ENCODE measurements at regions of chr19 and their contacts with region 1.

Region 1: DNA sequence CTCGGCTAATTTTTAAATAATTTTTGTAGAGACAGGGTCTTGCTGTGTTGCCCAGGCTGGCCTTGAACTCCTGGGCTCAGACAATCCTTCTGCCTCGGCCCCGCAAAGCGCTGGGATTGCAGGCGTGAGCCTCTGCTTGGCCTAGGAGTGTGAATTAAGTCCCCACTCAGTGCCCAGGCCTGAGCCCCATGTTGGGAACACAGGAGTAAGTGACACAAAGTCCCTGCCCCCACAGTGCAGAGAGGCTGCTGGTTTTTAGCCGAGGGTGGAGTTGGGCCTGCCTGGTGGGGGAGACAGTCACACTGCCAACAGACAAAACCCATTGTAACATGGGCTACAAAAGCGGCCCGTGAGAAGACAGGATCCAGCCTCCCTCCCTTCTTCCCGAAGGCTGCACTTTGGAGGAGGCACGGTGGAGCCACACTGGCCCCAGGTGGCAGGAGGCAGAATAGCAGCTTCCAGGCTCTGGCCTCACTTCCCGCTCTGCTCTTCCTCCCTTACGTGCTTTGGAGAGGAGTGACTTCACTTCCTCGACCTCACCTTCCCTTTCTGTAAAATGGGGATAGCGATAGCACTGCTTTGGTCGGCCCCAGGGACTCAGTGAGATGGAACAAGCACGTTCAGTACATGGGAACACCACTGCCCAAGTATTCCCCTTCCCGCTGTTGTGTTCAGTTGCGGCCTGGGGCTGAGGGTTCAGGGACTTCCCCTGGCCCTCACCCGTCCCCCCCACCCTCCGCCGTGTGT is 15.2 kb upstream of the EHD2 start:
- DNase-seq: peak; percentile 74
- H3K4me3 Mint-ChIP-seq: no peak overlapping the region
- H3K27ac Mint-ChIP-seq: no peak overlapping the region
- H3K4me1 Mint-ChIP-seq: peaks cover 2% of the 10 kb centered on the region
- H3K27me3 Mint-ChIP-seq: no peaks in the 10 kb centered on the region

Region 2: GRCh38 chr19:47284324-47284899 is 413.6 kb before region 1 on chr19:
- CTCF ChIA-PET with region 1: no interaction called
- intact Hi-C with region 1: loop called (anchors 5 kb)
- DNase-seq: peak; percentile 58
- H3K4me3 Mint-ChIP-seq: no peak overlapping the region
- H3K27ac Mint-ChIP-seq: no peak overlapping the region
- H3K4me1 Mint-ChIP-seq: peaks cover 6% of the 10 kb centered on the region
- H3K27me3 Mint-ChIP-seq: no peaks in the 10 kb centered on the region

Region 3: GRCh38 chr19:47436712-47437401 is 261.2 kb before region 1 on chr19:
- CTCF ChIA-PET with region 1: interaction called, 64 read pairs
- intact Hi-C with region 1: loop called (anchors 1 kb)
- DNase-seq: peak; percentile 92
- H3K4me3 Mint-ChIP-seq: no peak overlapping the region
- H3K27ac Mint-ChIP-seq: no peak overlapping the region
- H3K4me1 Mint-ChIP-seq: peaks cover 19% of the 10 kb centered on the region
- H3K27me3 Mint-ChIP-seq: peaks cover 40% of the 10 kb centered on the region

Region 4: GRCh38 chr19:47514869-47515588 is 183.0 kb before region 1 on chr19 and contains the start of gene NAPA:
- CTCF ChIA-PET with region 1: interaction called, 3 read pairs
- intact Hi-C with region 1: loop called (anchors 2 kb)
- DNase-seq: peak; percentile 100
- H3K4me3 Mint-ChIP-seq: peak within 1 kb of the TSS; percentile 98
- H3K27ac Mint-ChIP-seq: peak within 1 kb of the TSS; percentile 97
- H3K4me1 Mint-ChIP-seq: peaks cover 81% of the 10 kb centered on the region
- H3K27me3 Mint-ChIP-seq: no peaks in the 10 kb centered on the region
- total RNA-seq, gene NAPA: 72.5 to 75.1 TPM

Region 5: GRCh38 chr19:47713046-47714021 is 15.3 kb after region 1 on chr19 and contains the start of gene EHD2:
- CTCF ChIA-PET with region 1: interaction called, 13 read pairs
- intact Hi-C with region 1: no loop called
- DNase-seq: peak; percentile 47
- H3K4me3 Mint-ChIP-seq: peak within 1 kb of the TSS; percentile 31
- H3K27ac Mint-ChIP-seq: no peak within 1 kb of the TSS
- H3K4me1 Mint-ChIP-seq: peaks cover 7% of the 10 kb centered on the region
- H3K27me3 Mint-ChIP-seq: peaks cover 35% of the 10 kb centered on the region
- total RNA-seq, gene EHD2: 0.27 to 0.41 TPM

Region 6: DNA sequence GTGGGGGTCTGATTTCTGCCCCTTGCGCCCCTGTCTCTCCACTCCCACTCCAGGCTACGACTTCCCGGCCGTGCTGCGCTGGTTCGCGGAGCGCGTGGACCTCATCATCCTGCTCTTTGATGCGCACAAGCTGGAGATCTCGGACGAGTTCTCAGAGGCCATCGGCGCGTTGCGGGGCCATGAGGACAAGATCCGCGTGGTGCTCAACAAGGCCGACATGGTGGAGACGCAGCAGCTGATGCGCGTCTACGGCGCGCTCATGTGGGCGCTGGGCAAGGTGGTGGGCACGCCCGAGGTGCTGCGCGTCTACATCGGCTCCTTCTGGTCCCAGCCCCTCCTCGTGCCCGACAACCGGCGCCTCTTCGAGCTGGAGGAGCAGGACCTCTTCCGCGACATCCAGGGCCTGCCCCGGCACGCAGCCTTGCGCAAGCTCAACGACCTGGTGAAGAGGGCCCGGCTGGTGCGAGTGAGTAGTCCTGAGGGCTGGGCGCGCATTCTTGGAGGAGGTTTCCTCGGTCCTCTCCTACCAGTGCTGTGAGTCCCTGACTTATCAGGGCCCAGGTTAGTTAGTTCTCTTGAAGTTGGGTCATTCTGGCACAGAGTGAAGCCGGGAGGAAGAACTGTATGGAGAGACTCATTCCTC is 27.8 kb after region 1 on chr19:
- CTCF ChIA-PET with region 1: no interaction called
- intact Hi-C with region 1: no loop called
- DNase-seq: no peak
- H3K4me3 Mint-ChIP-seq: no peak overlapping the region
- H3K27ac Mint-ChIP-seq: no peak overlapping the region
- H3K4me1 Mint-ChIP-seq: peaks cover 16% of the 10 kb centered on the region
- H3K27me3 Mint-ChIP-seq: peaks cover 15% of the 10 kb centered on the region

Measured in activated naive CD4-positive, alpha-beta T cell treated with anti-CD3 and anti-CD28 coated beads for 36 hours (primary cell).